ENCODE measurements at regions of chr10 and their contacts with region 1.

Region 1: GRCh38 chr10:71708301-71708703 is 11.3 kb downstream of the C10orf105 start:
- DNase-seq: peak; percentile 83
- ATAC-seq: peak; percentile 77
- H3K4me3 Mint-ChIP-seq: no peak overlapping the region
- H3K27ac Mint-ChIP-seq: no peak overlapping the region
- H3K4me1 Mint-ChIP-seq: peaks cover 30% of the 10 kb centered on the region
- H3K27me3 Mint-ChIP-seq: no peaks in the 10 kb centered on the region

Region 2: GRCh38 chr10:71383972-71384687 is 324.2 kb before region 1 on chr10:
- CTCF ChIA-PET with region 1: interaction called, 6 read pairs
- POLR2A ChIA-PET with region 1: no interaction called
- intact Hi-C with region 1: loop called (anchors 1 to 5 kb)
- DNase-seq: peak; percentile 87
- ATAC-seq: peak; percentile 95
- H3K4me3 Mint-ChIP-seq: no peak overlapping the region
- H3K27ac Mint-ChIP-seq: no peak overlapping the region
- H3K4me1 Mint-ChIP-seq: no peaks in the 10 kb centered on the region
- H3K27me3 Mint-ChIP-seq: no peaks in the 10 kb centered on the region

Region 3: DNA sequence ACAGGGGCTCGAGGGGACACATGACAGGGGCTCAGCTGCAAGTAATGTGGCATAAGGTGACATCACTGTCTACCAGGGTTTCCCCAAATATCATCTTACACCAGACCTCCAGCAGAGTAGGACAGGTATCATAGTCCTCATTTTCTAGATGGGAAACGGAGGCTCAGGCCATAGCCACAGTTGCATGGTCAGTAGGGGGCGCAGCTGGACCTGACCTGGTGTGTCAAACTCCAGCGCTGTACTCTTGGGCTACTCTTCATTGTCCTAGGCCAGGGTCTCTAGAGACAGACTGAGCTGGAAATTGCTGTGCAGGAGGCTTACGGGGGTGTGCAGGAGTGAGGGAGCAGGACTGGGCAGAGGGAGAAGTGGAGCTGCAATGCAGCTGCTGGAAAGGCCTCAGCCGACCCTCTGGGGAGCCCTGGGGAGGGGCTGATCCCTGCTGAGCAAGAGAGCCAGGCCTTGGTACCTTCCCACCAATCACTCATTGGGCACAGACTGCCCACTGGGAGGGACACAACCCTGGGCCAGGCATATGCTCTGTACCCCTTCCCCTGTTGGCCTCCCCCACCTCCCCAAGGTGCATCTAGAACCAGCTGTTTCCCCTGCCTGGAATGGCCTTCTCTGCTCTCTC is 221.7 kb before region 1 on chr10:
- CTCF ChIA-PET with region 1: interaction called, 3 read pairs
- POLR2A ChIA-PET with region 1: no interaction called
- intact Hi-C with region 1: loop called in 1 of 2 experiments (anchors 2 kb)
- DNase-seq: peak; percentile 81
- ATAC-seq: peak; percentile 64
- H3K4me3 Mint-ChIP-seq: no peak overlapping the region
- H3K27ac Mint-ChIP-seq: no peak overlapping the region
- H3K4me1 Mint-ChIP-seq: no peaks in the 10 kb centered on the region
- H3K27me3 Mint-ChIP-seq: peaks cover 4% of the 10 kb centered on the region

Region 4: GRCh38 chr10:71597821-71598498 is 110.3 kb before region 1 on chr10:
- CTCF ChIA-PET with region 1: no interaction called
- POLR2A ChIA-PET with region 1: no interaction called
- intact Hi-C with region 1: no loop called
- DNase-seq: no peak
- ATAC-seq: no peak
- H3K4me3 Mint-ChIP-seq: no peak overlapping the region
- H3K27ac Mint-ChIP-seq: no peak overlapping the region
- H3K4me1 Mint-ChIP-seq: peaks cover 11% of the 10 kb centered on the region
- H3K27me3 Mint-ChIP-seq: no peaks in the 10 kb centered on the region

Region 5: DNA sequence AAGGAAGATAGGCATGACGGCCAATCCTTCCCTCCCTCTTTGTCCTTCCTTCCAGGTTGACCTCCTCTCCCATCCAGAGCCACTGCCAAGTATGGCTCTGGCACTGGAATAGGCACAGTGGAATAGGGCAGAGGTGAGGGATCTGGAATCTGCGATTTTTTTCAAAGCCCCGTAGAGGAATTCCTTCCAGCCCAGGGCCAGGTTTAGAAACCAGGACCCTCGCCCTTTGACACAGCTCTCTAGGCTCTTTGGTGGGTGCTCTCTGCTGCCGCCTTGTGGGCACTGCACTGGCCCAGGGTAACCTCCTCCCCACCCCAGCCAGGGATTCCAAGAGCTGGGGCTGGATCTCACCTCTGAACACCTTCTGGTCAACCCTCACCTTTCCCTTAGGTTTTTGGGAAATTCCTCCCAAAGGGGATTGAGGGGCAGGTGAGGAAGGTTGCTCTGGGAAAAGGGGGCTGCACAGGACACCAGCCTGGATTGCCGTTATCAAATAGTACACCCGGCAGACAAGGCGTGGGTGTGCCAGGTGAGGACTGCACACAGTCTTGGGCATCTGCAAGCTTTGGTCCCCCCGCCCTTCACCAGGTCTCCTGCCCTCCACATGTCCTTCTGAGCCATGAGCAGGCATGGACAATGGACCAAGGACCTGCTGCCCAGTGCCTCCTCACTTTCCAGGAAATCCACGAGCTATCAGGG is 11.5 kb before region 1 on chr10:
- CTCF ChIA-PET with region 1: interaction called, 63 read pairs
- POLR2A ChIA-PET with region 1: no interaction called
- intact Hi-C with region 1: no loop called
- DNase-seq: peak; percentile 85
- ATAC-seq: peak; percentile 82
- H3K4me3 Mint-ChIP-seq: no peak overlapping the region
- H3K27ac Mint-ChIP-seq: no peak overlapping the region
- H3K4me1 Mint-ChIP-seq: peaks cover 37% of the 10 kb centered on the region
- H3K27me3 Mint-ChIP-seq: no peaks in the 10 kb centered on the region

Region 6: DNA sequence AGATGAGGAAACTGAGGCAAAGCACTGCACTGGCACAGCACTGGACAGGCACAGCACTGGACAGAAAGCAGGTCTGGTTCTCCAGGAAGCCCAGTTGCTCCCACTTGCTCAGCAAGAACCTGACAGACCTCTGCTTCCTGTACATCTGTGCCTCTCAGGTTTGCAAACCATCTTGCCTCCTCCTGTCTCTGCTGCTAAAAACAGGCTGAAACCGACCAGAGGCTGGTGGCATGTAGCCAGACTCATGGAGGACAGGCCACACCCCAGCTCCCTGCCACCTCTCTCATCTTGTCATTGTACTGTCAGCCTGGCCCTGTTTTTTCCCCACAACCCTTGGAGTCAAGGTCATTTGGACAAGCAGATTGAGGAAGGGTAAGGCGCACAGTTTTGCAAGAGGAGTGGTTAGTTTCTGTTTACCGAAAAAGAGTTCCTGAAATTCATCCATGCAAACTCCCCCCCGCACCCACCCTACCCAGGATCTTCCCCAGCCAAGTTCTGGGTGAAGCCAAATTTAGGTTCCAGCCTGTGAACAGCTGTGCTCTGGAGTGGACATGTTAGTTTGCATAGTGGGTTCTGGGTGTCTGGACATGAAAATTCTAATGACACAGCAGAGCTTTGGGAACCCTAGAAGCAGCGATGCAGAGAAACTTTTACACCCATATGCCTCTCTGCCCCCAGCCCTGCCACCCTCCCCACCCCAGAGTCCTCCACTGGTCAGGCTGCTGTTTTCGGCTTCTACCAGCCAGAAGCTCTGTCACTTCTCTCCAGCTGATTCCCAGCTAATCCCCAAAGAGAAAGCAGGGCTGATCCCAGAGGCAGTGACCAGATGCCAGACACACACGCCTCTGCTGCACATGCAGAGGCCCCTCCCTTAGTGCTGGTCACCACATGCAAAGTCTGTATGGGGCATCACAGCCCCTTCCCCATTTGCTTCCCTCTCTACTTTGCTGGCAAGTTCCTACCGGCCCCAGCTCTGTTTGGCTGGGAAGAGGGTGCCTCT is 19.7 kb after region 1 on chr10:
- CTCF ChIA-PET with region 1: interaction called, 17 read pairs
- POLR2A ChIA-PET with region 1: no interaction called
- intact Hi-C with region 1: no loop called
- DNase-seq: peak; percentile 86
- ATAC-seq: peak; percentile 45
- H3K4me3 Mint-ChIP-seq: peak overlapping the region; percentile 36
- H3K27ac Mint-ChIP-seq: peak overlapping the region; percentile 96
- H3K4me1 Mint-ChIP-seq: peaks cover 96% of the 10 kb centered on the region
- H3K27me3 Mint-ChIP-seq: no peaks in the 10 kb centered on the region

Region 7: GRCh38 chr10:72659694-72660093 is 951.4 kb after region 1 on chr10:
- CTCF ChIA-PET with region 1: no interaction called
- POLR2A ChIA-PET with region 1: no interaction called
- intact Hi-C with region 1: no loop called
- DNase-seq: no peak
- ATAC-seq: no peak
- H3K4me3 Mint-ChIP-seq: no peak overlapping the region
- H3K27ac Mint-ChIP-seq: no peak overlapping the region
- H3K4me1 Mint-ChIP-seq: no peaks in the 10 kb centered on the region
- H3K27me3 Mint-ChIP-seq: peaks cover 2% of the 10 kb centered on the region